Heart right ventricle (tissue), 16 donors: ENCODE measurements at regions of chr15 and their contacts with region 1.

Region 1: GRCh38 chr15:52227456-52227855 is 36.3 kb upstream of the GNB5 start:
- DNase-seq: peak in 1 of 2 donors; percentile 63
- ATAC-seq: peak; percentile 67 to 92 (median 82)
- H3K4me3 ChIP-seq: no peak overlapping the region
- H3K27ac ChIP-seq: no peak overlapping the region
- H3K4me1 ChIP-seq: no peaks in the 10 kb centered on the region
- H3K27me3 ChIP-seq: no peaks in the 10 kb centered on the region
- CTCF ChIP-seq: peak; percentile 58 to 83 (median 77)

Region 2: GRCh38 chr15:51888593-51889195 is 338.8 kb before region 1 on chr15:
- intact Hi-C with region 1: loop called in 2 of 10 experiments (anchors 10 kb)
- DNase-seq: no peak
- ATAC-seq: peak in 2 of 8 donors; percentile 40 to 56
- H3K4me3 ChIP-seq: no peak overlapping the region
- H3K27ac ChIP-seq: no peak overlapping the region
- H3K4me1 ChIP-seq: peaks cover 0 to 25% (median 13%) of the 10 kb centered on the region in 9 donors
- H3K27me3 ChIP-seq: no peaks in the 10 kb centered on the region
- CTCF ChIP-seq: peak; percentile 43 to 86 (median 72)

Region 3: GRCh38 chr15:52151353-52151752 is 76.1 kb before region 1 on chr15:
- intact Hi-C with region 1: no loop called
- DNase-seq: no peak
- ATAC-seq: peak in 2 of 8 donors; percentile 24 to 48
- H3K4me3 ChIP-seq: no peak overlapping the region
- H3K27ac ChIP-seq: no peak overlapping the region
- H3K4me1 ChIP-seq: peaks cover 0 to 4% (median 0%) of the 10 kb centered on the region in 9 donors
- H3K27me3 ChIP-seq: no peaks in the 10 kb centered on the region
- CTCF ChIP-seq: no peak

Region 4: DNA sequence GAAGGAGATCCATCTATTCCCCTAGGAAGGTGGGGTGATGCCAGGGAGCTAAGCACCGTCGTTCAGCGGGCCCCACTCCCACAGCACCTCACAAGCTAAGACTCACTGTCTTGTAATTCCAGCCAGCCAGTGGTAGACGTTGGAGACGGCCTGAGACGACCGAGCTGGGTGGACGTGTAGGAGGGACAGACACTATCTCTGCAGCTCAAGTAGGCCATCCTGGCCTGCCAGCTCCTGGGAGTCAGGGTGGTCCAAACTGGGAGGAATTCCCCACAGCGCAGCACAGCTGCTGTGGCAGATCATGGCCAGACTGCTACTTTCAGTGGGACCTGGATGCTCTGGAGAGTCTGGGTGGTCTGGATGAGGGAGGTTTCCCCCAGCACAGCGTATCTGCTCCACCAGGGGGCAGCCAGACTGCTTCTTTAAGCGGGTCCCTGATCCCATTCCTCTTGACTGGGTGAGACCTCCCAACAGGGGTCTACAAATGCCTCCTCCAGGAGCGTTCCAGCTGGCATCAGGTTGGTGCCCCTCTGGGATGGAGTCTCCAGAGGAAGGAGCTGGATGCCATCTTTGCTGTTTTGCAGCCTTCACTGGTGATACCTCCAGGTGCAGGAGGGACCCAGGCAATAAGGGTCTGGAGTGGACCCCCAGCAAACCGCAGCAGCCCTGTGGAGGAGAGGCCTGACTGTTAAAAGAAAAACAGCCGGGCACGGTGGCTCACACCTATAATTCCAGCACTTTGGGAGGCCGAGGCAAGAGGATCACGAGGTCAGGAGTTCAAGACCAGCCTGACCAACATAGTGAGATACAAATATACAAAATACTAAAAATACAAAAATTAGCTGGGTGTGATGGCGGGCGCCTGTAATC is 63.9 kb before region 1 on chr15:
- intact Hi-C with region 1: loop called in 1 of 10 experiments (anchors 10 kb)
- DNase-seq: no peak
- ATAC-seq: peak in 1 of 8 donors; percentile 30
- H3K4me3 ChIP-seq: no peak overlapping the region
- H3K27ac ChIP-seq: no peak overlapping the region
- H3K4me1 ChIP-seq: no peaks in the 10 kb centered on the region
- H3K27me3 ChIP-seq: no peaks in the 10 kb centered on the region
- CTCF ChIP-seq: peak in 4 of 9 donors; percentile 7 to 25 (median 16)

Region 5: GRCh38 chr15:52179278-52180195 is 47.9 kb before region 1 on chr15:
- intact Hi-C with region 1: loop called in 1 of 10 experiments (anchors 5 kb)
- DNase-seq: peak; percentile 67 to 82
- ATAC-seq: peak; percentile 85 to 93 (median 90)
- H3K4me3 ChIP-seq: peak overlapping the region; percentile 51 to 87 (median 74)
- H3K27ac ChIP-seq: peak overlapping the region; percentile 53 to 86 (median 78)
- H3K4me1 ChIP-seq: peaks cover 0 to 19% (median 8%) of the 10 kb centered on the region in 9 donors
- H3K27me3 ChIP-seq: peaks cover 0 to 19% (median 0%) of the 10 kb centered on the region in 7 donors
- CTCF ChIP-seq: no peak

Region 6: DNA sequence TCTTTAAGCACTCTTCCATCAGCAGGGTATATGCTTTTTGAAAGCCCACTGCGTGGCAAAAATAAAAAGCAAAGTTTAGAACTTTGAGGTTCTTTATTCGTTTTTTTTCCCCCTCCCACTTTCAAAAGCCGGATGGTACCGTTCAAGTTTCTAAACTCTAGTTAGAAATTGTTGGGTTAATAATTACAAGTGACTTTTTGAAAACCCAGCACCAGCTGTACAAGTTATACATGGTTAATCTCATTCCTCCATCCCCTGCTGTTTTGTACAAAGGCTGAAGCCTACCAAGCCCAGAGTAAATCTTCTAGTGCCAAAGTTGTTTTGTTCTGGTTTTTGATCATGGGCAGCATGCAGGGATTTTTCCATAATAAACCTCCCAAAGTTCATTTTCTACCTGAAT is 1483.5 kb after region 1 on chr15:
- intact Hi-C with region 1: loop called in 1 of 10 experiments (anchors 5 kb)
- DNase-seq: no peak
- ATAC-seq: no peak
- H3K4me3 ChIP-seq: no peak overlapping the region
- H3K27ac ChIP-seq: no peak overlapping the region
- H3K4me1 ChIP-seq: no peaks in the 10 kb centered on the region
- H3K27me3 ChIP-seq: peaks cover 0 to 3% (median 0%) of the 10 kb centered on the region in 7 donors
- CTCF ChIP-seq: no peak